CD4-positive, alpha-beta T cell (primary cell): ENCODE measurements at regions of chr12 and their contacts with region 1.

Region 1: DNA sequence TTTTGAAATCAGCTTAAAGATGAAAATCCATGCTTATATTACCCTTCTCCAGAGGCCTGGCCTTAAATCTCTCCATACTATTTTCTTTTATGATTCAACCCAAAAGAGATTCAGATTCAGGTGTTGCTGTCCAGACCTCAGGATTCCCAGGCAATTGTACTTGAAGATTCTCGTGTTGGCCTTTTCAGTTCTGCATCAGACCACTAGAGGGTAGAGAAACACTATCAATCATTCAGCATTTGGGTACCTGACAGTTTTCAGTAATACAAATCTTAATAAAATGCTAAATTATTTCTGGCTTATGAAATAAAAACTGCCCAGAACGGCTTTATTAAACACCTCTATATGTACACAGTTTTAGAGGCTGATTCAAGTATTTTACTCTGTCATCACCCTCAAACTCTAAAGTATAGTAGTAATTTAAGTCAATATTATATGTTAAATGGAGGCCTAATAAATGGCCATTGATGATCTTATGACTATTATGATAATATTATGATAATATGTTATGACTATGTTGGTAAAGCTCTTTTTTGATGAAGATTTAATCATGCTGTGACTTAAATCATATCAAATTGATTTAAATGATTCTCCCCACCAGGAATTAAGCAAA is 301.1 kb downstream of the DUSP6 start:
- DNase-seq: peak in 6 of 14 experiments; percentile 1 to 74 (median 42)
- ATAC-seq: peak; percentile 61
- H3K4me3 ChIP-seq: no peak overlapping the region
- H3K4me3 Mint-ChIP-seq: no peak overlapping the region
- H3K27ac ChIP-seq: no peak overlapping the region
- H3K27ac Mint-ChIP-seq: no peak overlapping the region
- H3K4me1 ChIP-seq: no peaks in the 10 kb centered on the region
- H3K4me1 Mint-ChIP-seq: no peaks in the 10 kb centered on the region
- H3K27me3 ChIP-seq: no peaks in the 10 kb centered on the region
- H3K27me3 Mint-ChIP-seq: no peaks in the 10 kb centered on the region
- CTCF ChIP-seq: peak; percentile 88

Region 2: GRCh38 chr12:87678453-87678852 is 1372.7 kb before region 1 on chr12:
- CTCF ChIA-PET with region 1: no interaction called
- POLR2A ChIA-PET with region 1: no interaction called
- intact Hi-C with region 1: no loop called
- DNase-seq: no peak
- ATAC-seq: no peak
- H3K4me3 ChIP-seq: no peak overlapping the region
- H3K4me3 Mint-ChIP-seq: no peak overlapping the region
- H3K27ac ChIP-seq: no peak overlapping the region
- H3K27ac Mint-ChIP-seq: no peak overlapping the region
- H3K4me1 ChIP-seq: no peaks in the 10 kb centered on the region
- H3K4me1 Mint-ChIP-seq: no peaks in the 10 kb centered on the region
- H3K27me3 ChIP-seq: no peaks in the 10 kb centered on the region
- H3K27me3 Mint-ChIP-seq: no peaks in the 10 kb centered on the region
- CTCF ChIP-seq: no peak

Region 3: DNA sequence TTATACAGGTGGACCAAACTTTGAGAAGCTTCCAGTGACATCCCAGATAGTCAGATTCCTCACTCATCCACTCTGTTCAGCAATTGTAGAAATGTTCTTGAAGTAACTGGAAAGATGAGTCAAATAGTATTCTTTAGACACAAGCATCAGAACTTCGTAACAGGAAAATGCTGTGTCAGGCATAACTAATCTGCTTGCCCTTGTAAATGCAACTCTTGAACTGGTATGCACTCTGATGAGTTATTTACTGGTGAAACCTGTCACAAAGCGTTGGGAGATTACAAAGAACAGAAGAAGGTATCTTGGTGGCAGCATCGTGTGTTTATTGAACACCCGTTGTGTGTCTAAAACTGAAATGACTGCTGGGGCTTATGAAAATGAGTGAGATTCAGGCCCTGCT is 311.9 kb after region 1 on chr12:
- CTCF ChIA-PET with region 1: no interaction called
- POLR2A ChIA-PET with region 1: no interaction called
- intact Hi-C with region 1: loop called in 1 of 2 experiments (anchors 5 kb)
- DNase-seq: no peak
- ATAC-seq: no peak
- H3K4me3 ChIP-seq: no peak overlapping the region
- H3K4me3 Mint-ChIP-seq: no peak overlapping the region
- H3K27ac ChIP-seq: no peak overlapping the region
- H3K27ac Mint-ChIP-seq: no peak overlapping the region
- H3K4me1 ChIP-seq: no peaks in the 10 kb centered on the region
- H3K4me1 Mint-ChIP-seq: no peaks in the 10 kb centered on the region
- H3K27me3 ChIP-seq: no peaks in the 10 kb centered on the region
- H3K27me3 Mint-ChIP-seq: no peaks in the 10 kb centered on the region
- CTCF ChIP-seq: no peak

Region 4: GRCh38 chr12:89461649-89462612 is 410.8 kb after region 1 on chr12:
- CTCF ChIA-PET with region 1: interaction called, 3 read pairs
- POLR2A ChIA-PET with region 1: no interaction called
- intact Hi-C with region 1: loop called (anchors 1 kb)
- DNase-seq: peak in 3 of 14 experiments; percentile 68 to 78 (median 69)
- ATAC-seq: peak; percentile 88
- H3K4me3 ChIP-seq: no peak overlapping the region
- H3K4me3 Mint-ChIP-seq: peak overlapping the region; percentile 40
- H3K27ac ChIP-seq: no peak overlapping the region
- H3K27ac Mint-ChIP-seq: no peak overlapping the region
- H3K4me1 ChIP-seq: no peaks in the 10 kb centered on the region
- H3K4me1 Mint-ChIP-seq: peaks cover 16% of the 10 kb centered on the region
- H3K27me3 ChIP-seq: no peaks in the 10 kb centered on the region
- H3K27me3 Mint-ChIP-seq: no peaks in the 10 kb centered on the region
- CTCF ChIP-seq: peak; percentile 81

Region 5: DNA sequence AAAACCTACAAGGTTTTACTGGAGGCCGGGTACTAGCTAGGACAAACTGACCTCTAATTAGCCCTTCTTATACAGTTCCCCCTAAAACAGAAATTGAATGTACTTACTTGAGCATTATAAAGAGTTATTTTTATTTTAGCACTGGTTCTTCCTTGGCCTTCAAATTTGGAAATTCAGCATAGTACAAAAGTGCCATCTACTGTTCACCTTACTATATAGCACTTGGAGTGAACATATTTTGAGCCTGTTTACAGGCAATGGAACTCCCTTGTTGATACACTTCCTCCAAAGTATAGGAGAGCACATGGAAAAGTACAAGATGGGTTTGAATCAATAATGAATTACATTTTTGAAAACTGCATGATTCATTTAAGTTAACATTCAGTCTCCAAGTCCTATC is 478.6 kb after region 1 on chr12:
- CTCF ChIA-PET with region 1: no interaction called
- POLR2A ChIA-PET with region 1: no interaction called
- intact Hi-C with region 1: loop called (anchors 1 to 2 kb)
- DNase-seq: peak in 3 of 14 experiments; percentile 69 to 73 (median 72)
- ATAC-seq: peak; percentile 37
- H3K4me3 ChIP-seq: no peak overlapping the region
- H3K4me3 Mint-ChIP-seq: peak overlapping the region; percentile 58
- H3K27ac ChIP-seq: no peak overlapping the region
- H3K27ac Mint-ChIP-seq: peak overlapping the region; percentile 4
- H3K4me1 ChIP-seq: peaks cover 2% of the 10 kb centered on the region
- H3K4me1 Mint-ChIP-seq: peaks cover 19% of the 10 kb centered on the region
- H3K27me3 ChIP-seq: no peaks in the 10 kb centered on the region
- H3K27me3 Mint-ChIP-seq: no peaks in the 10 kb centered on the region
- CTCF ChIP-seq: peak; percentile 81